CD4-positive, alpha-beta memory T cell (primary cell): ENCODE measurements at regions of chr12 and their contacts with region 1.

Region 1: GRCh38 chr12:64610149-64610678 is at the start of gene RASSF3:
- DNase-seq: peak; percentile 74 to 79 (median 79)
- H3K4me3 ChIP-seq: peak within 1 kb of the TSS; percentile 91 to 95
- H3K4me3 Mint-ChIP-seq: peak within 1 kb of the TSS; percentile 96 to 99 (median 98)
- H3K27ac ChIP-seq: peak within 1 kb of the TSS; percentile 88
- H3K27ac Mint-ChIP-seq: peak within 1 kb of the TSS; percentile 95 to 98 (median 97)
- H3K4me1 ChIP-seq: peaks cover 41% of the 10 kb centered on the region
- H3K4me1 Mint-ChIP-seq: peaks cover 27 to 65% (median 40%) of the 10 kb centered on the region in 4 donors
- H3K27me3 ChIP-seq: no peaks in the 10 kb centered on the region
- H3K27me3 Mint-ChIP-seq: no peaks in the 10 kb centered on the region
- total RNA-seq, gene RASSF3: 159 TPM

Region 2: DNA sequence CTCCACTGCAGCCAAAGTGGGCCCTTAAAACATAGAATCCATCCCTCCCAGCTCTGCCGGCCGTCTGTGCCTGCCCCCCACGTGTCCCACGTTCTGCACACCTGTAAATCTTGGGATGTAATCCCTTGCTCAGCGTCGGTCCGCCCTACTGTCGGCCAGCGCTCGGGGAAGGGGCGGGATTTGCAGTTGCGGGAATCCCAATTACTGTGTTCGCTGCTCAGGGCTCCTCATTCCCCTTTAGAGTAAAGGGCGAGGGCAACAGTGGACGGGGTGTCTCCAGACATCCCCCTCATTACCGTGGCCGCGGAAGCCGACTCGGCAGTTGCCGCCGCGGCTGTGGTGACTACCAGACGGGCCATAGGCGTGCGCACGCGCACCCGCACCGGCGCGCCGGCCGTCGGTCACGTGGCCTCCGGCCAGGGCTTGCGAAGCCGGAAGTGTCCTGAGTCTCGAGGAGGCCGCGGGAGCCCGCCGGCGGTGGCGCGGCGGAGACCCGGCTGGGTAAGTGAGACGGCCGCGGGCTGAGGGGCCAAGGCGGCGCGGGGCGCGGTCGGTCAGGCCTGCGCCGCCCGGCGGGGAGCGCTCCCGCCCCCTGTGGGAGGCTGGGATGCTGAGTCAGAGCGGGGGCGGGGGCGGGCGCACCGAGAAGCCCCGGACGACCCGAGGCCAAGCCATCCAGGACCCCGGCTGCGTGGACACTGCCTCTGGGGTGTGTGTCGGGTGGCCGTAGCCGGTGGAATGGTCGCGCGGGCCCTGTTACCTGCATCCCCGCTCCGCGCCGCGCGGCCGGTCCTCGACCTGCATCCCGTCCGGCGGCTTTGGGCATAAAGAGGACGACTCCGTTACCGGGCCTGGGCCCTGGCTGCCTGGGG is 158.3 kb before region 1 on chr12 and contains the start of gene TBK1:
- CTCF ChIA-PET with region 1: no interaction called
- POLR2A ChIA-PET with region 1: no interaction called
- intact Hi-C with region 1: loop called (anchors 5 kb)
- DNase-seq: peak; percentile 42 to 66 (median 50)
- H3K4me3 ChIP-seq: peak within 1 kb of the TSS; percentile 87 to 97
- H3K4me3 Mint-ChIP-seq: peak within 1 kb of the TSS; percentile 94 to 98 (median 96)
- H3K27ac ChIP-seq: peak within 1 kb of the TSS; percentile 92
- H3K27ac Mint-ChIP-seq: peak within 1 kb of the TSS; percentile 93 to 99 (median 97)
- H3K4me1 ChIP-seq: peaks cover 51% of the 10 kb centered on the region
- H3K4me1 Mint-ChIP-seq: peaks cover 33 to 59% (median 44%) of the 10 kb centered on the region in 4 donors
- H3K27me3 ChIP-seq: no peaks in the 10 kb centered on the region
- H3K27me3 Mint-ChIP-seq: no peaks in the 10 kb centered on the region
- total RNA-seq, gene TBK1: 23.8 to 25.0 TPM

Region 3: DNA sequence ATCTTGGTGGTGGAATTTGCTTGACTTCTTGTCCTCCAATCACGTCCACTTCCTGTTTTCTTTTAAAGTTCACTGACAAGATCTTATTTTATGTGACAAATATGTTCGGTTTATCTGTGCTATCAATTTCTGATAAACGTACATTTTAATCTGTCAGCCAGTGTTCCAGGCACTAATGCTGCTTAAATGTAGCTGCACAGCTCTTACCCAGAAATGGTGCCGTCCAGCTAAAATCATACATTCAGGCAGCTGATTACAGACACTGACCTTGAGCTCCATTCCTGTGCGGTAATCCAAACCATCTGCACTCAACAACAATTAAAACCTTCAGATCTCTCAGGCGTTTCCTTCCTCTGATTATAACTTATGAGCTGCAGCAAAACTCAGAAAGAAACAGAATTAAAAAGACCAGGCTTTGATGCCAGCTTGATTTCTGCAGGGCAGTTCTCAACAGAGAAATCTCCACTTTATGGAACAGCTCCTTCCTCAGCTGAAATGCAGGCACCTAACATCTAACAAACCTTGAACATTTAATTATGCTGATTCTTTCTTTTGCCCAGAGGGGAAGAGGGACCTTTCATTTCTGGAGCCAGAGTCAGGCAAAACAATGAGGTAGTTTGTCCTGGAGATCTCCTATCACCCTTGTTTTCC is 26.3 kb before region 1 on chr12:
- CTCF ChIA-PET with region 1: interaction called, 32 read pairs
- POLR2A ChIA-PET with region 1: interaction called, 71 read pairs
- intact Hi-C with region 1: no loop called
- DNase-seq: peak in 4 of 5 donors; percentile 19 to 27 (median 24)
- H3K4me3 ChIP-seq: peak overlapping the region; percentile 36 to 55
- H3K4me3 Mint-ChIP-seq: peak overlapping the region; percentile 40 to 79 (median 74)
- H3K27ac ChIP-seq: peak overlapping the region; percentile 0
- H3K27ac Mint-ChIP-seq: peak overlapping the region; percentile 38 to 89 (median 75)
- H3K4me1 ChIP-seq: peaks cover 35% of the 10 kb centered on the region
- H3K4me1 Mint-ChIP-seq: peaks cover 21 to 40% (median 29%) of the 10 kb centered on the region in 4 donors
- H3K27me3 ChIP-seq: no peaks in the 10 kb centered on the region
- H3K27me3 Mint-ChIP-seq: no peaks in the 10 kb centered on the region

Region 4: GRCh38 chr12:64625243-64626077 is 15.2 kb after region 1 on chr12:
- CTCF ChIA-PET with region 1: interaction called, 5 read pairs
- POLR2A ChIA-PET with region 1: interaction called, 26 read pairs
- intact Hi-C with region 1: loop called (anchors 2 kb)
- DNase-seq: peak in 2 of 5 donors; percentile 21 to 49
- H3K4me3 ChIP-seq: peak overlapping the region in 1 of 2 donors; percentile 33
- H3K4me3 Mint-ChIP-seq: peak overlapping the region; percentile 81 to 97 (median 90)
- H3K27ac ChIP-seq: peak overlapping the region; percentile 23
- H3K27ac Mint-ChIP-seq: peak overlapping the region; percentile 83 to 96 (median 92)
- H3K4me1 ChIP-seq: peaks cover 94% of the 10 kb centered on the region
- H3K4me1 Mint-ChIP-seq: peaks cover 40 to 88% (median 64%) of the 10 kb centered on the region in 4 donors
- H3K27me3 ChIP-seq: no peaks in the 10 kb centered on the region
- H3K27me3 Mint-ChIP-seq: no peaks in the 10 kb centered on the region

Region 5: GRCh38 chr12:64669270-64669842 is 59.1 kb after region 1 on chr12:
- CTCF ChIA-PET with region 1: interaction called, 12 read pairs
- POLR2A ChIA-PET with region 1: interaction called, 334 read pairs
- intact Hi-C with region 1: loop called (anchors 1 kb)
- DNase-seq: peak; percentile 82 to 87 (median 83)
- H3K4me3 ChIP-seq: peak overlapping the region; percentile 48 to 61
- H3K4me3 Mint-ChIP-seq: peak overlapping the region; percentile 88 to 96 (median 92)
- H3K27ac ChIP-seq: peak overlapping the region; percentile 77
- H3K27ac Mint-ChIP-seq: peak overlapping the region; percentile 92 to 99 (median 98)
- H3K4me1 ChIP-seq: peaks cover 100% of the 10 kb centered on the region
- H3K4me1 Mint-ChIP-seq: peaks cover 76 to 98% (median 87%) of the 10 kb centered on the region in 4 donors
- H3K27me3 ChIP-seq: no peaks in the 10 kb centered on the region
- H3K27me3 Mint-ChIP-seq: no peaks in the 10 kb centered on the region

Region 6: GRCh38 chr12:64687816-64688215 is 77.6 kb after region 1 on chr12:
- CTCF ChIA-PET with region 1: interaction called, 87 read pairs
- POLR2A ChIA-PET with region 1: interaction called, 334 read pairs
- intact Hi-C with region 1: loop called (anchors 1 kb)
- DNase-seq: no peak
- H3K4me3 ChIP-seq: no peak overlapping the region
- H3K4me3 Mint-ChIP-seq: peak overlapping the region; percentile 5 to 71 (median 67)
- H3K27ac ChIP-seq: peak overlapping the region; percentile 19
- H3K27ac Mint-ChIP-seq: peak overlapping the region; percentile 48 to 97 (median 88)
- H3K4me1 ChIP-seq: peaks cover 87% of the 10 kb centered on the region
- H3K4me1 Mint-ChIP-seq: peaks cover 60 to 83% (median 71%) of the 10 kb centered on the region in 4 donors
- H3K27me3 ChIP-seq: no peaks in the 10 kb centered on the region
- H3K27me3 Mint-ChIP-seq: no peaks in the 10 kb centered on the region

Region 7: GRCh38 chr12:64759035-64759901 is 149.1 kb after region 1 on chr12 and contains the start of gene GNS:
- CTCF ChIA-PET with region 1: no interaction called
- POLR2A ChIA-PET with region 1: no interaction called
- intact Hi-C with region 1: loop called (anchors 1 kb)
- DNase-seq: peak; percentile 86 to 94 (median 89)
- H3K4me3 ChIP-seq: peak within 1 kb of the TSS; percentile 45 to 86
- H3K4me3 Mint-ChIP-seq: peak within 1 kb of the TSS; percentile 89 to 99 (median 98)
- H3K27ac ChIP-seq: peak within 1 kb of the TSS; percentile 74
- H3K27ac Mint-ChIP-seq: peak within 1 kb of the TSS; percentile 93 to 98 (median 96)
- H3K4me1 ChIP-seq: peaks cover 35% of the 10 kb centered on the region
- H3K4me1 Mint-ChIP-seq: peaks cover 27 to 52% (median 40%) of the 10 kb centered on the region in 4 donors
- H3K27me3 ChIP-seq: no peaks in the 10 kb centered on the region
- H3K27me3 Mint-ChIP-seq: no peaks in the 10 kb centered on the region
- total RNA-seq, gene GNS: 34.2 to 35.0 TPM